ENCODE measurements at regions of chr20 and their contacts with region 1.

Region 1: GRCh38 chr20:8722276-8722928 is 346.5 kb upstream of the PLCB4 start:
- DNase-seq: peak; percentile 48
- ATAC-seq: peak; percentile 45
- H3K4me3 Mint-ChIP-seq: no peak overlapping the region
- H3K27ac Mint-ChIP-seq: no peak overlapping the region
- H3K4me1 Mint-ChIP-seq: no peaks in the 10 kb centered on the region
- H3K27me3 Mint-ChIP-seq: no peaks in the 10 kb centered on the region

Region 2: DNA sequence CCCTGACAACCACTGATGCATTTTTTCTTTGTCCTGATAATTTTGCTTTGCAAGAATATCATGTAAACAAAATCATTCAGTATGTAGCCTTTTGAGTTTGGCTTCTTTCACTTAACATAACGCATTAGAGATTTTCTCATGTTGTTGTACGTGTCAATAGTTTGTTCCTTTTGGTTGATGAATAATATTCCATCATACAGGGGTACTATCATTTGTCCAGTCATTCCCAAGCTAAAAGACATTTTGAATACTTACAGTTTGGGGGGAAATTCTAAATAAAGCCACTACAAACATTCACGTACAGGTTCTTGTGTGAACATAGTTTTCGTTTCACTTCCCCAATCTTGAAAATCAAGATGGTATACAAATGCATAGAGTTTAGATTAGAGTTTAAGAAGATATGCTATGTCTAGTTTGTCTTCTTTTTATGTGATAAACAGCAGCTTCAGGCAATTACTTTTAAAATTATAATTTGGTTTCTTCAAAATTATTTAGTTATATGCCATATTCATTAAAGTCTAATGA is 787.3 kb before region 1 on chr20:
- CTCF ChIA-PET with region 1: interaction called, 51 read pairs
- DNase-seq: no peak
- ATAC-seq: no peak
- H3K4me3 Mint-ChIP-seq: no peak overlapping the region
- H3K27ac Mint-ChIP-seq: no peak overlapping the region
- H3K4me1 Mint-ChIP-seq: no peaks in the 10 kb centered on the region
- H3K27me3 Mint-ChIP-seq: peaks cover 13% of the 10 kb centered on the region

Region 3: GRCh38 chr20:8043687-8044282 is 678.6 kb before region 1 on chr20:
- CTCF ChIA-PET with region 1: interaction called, 58 read pairs
- DNase-seq: no peak
- ATAC-seq: peak; percentile 64
- H3K4me3 Mint-ChIP-seq: no peak overlapping the region
- H3K27ac Mint-ChIP-seq: no peak overlapping the region
- H3K4me1 Mint-ChIP-seq: peaks cover 2% of the 10 kb centered on the region
- H3K27me3 Mint-ChIP-seq: peaks cover 23% of the 10 kb centered on the region

Region 4: DNA sequence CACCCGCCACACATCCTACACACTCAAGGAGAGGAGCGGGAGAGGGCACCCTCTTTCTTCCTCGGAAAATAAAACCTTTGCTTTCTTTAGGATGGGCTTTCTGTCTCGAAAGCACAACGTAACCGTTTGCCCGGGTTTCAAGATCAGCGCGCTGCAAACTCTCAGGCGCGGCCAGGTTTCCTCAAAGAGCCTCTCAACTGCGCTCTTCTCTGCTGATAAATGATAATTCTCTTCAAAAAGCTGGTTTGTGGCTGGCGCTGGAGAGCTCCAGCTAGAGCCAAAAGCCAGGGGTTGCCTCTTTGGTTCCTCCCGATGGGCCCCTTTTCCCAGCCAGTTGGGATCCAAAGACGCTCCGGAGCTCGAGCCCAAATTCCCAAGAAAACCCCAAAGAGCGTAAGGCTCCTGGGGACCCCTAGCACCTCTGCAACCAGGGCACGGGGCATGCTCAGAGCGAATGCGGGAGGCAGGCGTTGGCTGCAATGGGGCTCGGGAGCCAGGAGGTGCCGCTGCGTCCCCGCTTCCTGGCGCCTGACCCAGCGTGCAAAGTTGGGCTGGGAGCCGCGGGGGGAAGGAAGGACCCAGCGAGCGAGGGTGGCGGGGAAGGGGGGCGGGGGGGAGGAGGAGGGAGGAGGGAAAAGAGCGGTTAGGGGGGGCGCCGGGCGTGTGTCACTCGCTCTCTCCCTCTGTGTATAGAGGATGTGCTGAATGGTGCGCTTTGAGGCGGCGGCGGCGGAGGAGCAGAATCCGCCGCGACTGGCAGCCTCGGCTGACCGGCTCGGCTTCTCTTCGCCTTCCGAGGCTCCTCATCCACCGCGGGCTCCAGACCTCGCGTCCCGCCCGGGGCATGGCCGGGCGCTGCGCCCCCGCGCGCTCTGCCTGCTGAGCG is 590.6 kb before region 1 on chr20 and contains the start of gene PLCB1:
- CTCF ChIA-PET with region 1: interaction called, 18 read pairs
- DNase-seq: peak; percentile 85
- ATAC-seq: peak; percentile 95
- H3K4me3 Mint-ChIP-seq: peak within 1 kb of the TSS; percentile 66
- H3K27ac Mint-ChIP-seq: no peak within 1 kb of the TSS
- H3K4me1 Mint-ChIP-seq: peaks cover 33% of the 10 kb centered on the region
- H3K27me3 Mint-ChIP-seq: peaks cover 59% of the 10 kb centered on the region
- total RNA-seq, gene PLCB1: 2.4 to 3.2 TPM

Region 5: DNA sequence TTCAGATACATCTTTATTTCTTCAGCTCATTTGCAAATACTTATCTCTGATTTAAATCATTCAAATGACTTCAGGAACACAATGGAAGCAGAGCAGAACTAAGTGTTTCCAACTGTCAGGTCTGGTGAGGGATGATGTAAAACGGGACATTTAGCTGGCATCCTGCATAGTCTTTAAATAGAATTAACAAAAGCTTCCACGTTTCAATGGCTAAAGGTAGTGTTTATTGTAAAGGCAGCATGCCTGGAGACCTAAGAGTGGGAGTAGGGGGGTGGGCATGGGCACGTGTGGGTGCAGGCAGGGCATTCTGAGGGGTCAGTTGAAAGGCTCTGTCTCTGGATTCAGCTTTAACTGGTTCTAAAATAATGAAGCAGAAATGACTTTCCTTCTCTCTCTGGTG is 415.5 kb before region 1 on chr20:
- CTCF ChIA-PET with region 1: interaction called, 12 read pairs
- DNase-seq: no peak
- ATAC-seq: no peak
- H3K4me3 Mint-ChIP-seq: no peak overlapping the region
- H3K27ac Mint-ChIP-seq: no peak overlapping the region
- H3K4me1 Mint-ChIP-seq: peaks cover 1% of the 10 kb centered on the region
- H3K27me3 Mint-ChIP-seq: peaks cover 8% of the 10 kb centered on the region

Region 6: DNA sequence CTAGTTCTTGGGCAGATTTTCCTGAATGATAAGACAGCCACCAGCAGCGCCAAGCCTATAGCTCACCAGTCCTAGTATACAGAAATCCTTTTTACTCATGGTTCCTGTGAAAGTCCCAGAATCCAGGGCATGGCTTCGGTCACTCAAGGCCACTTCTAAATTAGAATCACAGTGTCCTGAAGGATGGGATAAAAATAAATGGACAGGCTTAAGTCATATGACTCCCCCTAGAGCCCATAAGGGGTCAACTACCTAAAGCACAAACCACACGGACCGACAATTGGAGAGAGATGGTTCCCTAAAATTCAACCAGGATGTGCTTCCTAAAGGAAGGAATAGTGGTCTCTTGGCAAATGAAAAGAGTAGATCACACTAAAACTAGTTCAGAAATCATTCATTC is 57.6 kb before region 1 on chr20:
- CTCF ChIA-PET with region 1: interaction called, 10 read pairs
- DNase-seq: no peak
- ATAC-seq: no peak
- H3K4me3 Mint-ChIP-seq: no peak overlapping the region
- H3K27ac Mint-ChIP-seq: no peak overlapping the region
- H3K4me1 Mint-ChIP-seq: no peaks in the 10 kb centered on the region
- H3K27me3 Mint-ChIP-seq: no peaks in the 10 kb centered on the region

Region 7: GRCh38 chr20:8700756-8701155 is 21.6 kb before region 1 on chr20:
- CTCF ChIA-PET with region 1: interaction called, 13 read pairs
- DNase-seq: no peak
- ATAC-seq: no peak
- H3K4me3 Mint-ChIP-seq: no peak overlapping the region
- H3K27ac Mint-ChIP-seq: no peak overlapping the region
- H3K4me1 Mint-ChIP-seq: no peaks in the 10 kb centered on the region
- H3K27me3 Mint-ChIP-seq: no peaks in the 10 kb centered on the region

Measured in activated CD8-positive, alpha-beta memory T cell treated with anti-CD3 and anti-CD28 coated beads, Interleukin-2, amount 10 ng/mL, durations not matched to agents 7 days and 5 days (primary cell).